ENCODE measurements at regions of chr10 and their contacts with region 1.

Region 1: DNA sequence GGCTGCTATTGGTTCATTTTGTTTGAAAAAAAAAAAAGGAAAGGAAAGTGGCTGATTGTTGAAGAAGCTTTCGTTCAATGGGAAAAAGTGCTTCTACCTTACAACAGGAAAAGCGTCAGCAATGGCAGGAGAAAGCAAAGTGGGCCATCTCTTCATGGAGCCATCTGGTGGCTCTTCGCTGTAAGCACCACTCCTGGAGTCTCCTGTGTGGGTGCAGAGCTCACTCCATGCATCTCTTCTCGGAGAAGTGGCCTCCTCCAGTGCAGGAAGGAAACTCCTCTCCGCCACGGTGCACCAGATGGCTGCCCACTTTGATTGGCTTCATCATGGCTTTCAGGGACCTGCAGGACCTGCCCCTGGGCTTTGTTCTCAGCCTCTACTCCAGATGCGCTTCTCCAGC is 250.9 kb downstream of the PTEN start:
- DNase-seq: peak in 2 of 3 donors; percentile 54 to 58
- H3K4me3 ChIP-seq: peak overlapping the region in 1 of 3 experiments; percentile 6
- H3K4me3 Mint-ChIP-seq: peak overlapping the region in 1 of 2 donors; percentile 18
- H3K27ac ChIP-seq: peak overlapping the region in 1 of 2 donors; percentile 44
- H3K27ac Mint-ChIP-seq: peak overlapping the region; percentile 51 to 86 (median 71)
- H3K4me1 ChIP-seq: peaks cover 72 to 74% of the 10 kb centered on the region in 2 donors
- H3K4me1 Mint-ChIP-seq: peaks cover 23% of the 10 kb centered on the region
- H3K27me3 ChIP-seq: no peaks in the 10 kb centered on the region
- H3K27me3 Mint-ChIP-seq: peaks cover 0 to 2% (median 2%) of the 10 kb centered on the region in 3 donors
- CTCF ChIP-seq: peak; percentile 55

Region 2: DNA sequence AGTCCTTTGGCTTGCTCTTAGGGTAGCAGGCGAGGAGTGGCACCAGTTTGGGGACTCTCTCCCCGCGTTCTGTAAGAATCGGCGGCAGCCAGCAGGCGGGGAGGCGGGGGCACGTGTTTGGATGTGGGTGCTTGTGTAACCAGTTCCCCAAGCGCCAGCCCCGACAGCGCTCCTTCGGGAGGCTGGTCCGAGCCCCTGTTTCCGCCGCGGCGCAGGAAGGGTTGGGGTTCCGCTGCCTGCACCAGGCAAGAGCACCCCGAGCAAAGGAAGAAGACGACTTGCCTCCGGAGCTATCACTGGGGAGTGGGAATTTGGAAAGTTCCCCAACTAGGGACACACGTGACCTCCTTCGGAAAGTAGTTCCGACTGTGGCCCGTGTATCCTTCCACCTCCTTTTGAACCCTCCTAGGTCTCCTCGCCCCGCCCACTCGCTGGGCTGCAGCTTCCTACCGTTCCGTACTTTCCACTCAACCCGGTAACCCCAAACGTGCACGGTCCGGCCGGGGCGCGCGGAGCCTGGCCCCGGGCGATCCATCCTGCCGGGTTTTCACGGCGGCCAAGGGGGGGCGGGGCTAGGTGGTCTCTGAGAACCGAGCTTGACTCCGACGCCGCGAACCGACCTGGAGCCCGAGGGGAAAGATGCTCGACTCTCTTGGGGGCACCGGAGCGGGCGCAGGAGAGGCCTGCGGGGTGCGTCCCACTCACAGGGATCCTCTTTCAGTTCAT is 252.3 kb before region 1 on chr10:
- intact Hi-C with region 1: loop called in 1 of 2 experiments (anchors 5 kb)
- DNase-seq: peak; percentile 96 to 98 (median 97)
- H3K4me3 ChIP-seq: peak overlapping the region; percentile 81 to 97 (median 86)
- H3K4me3 Mint-ChIP-seq: peak overlapping the region; percentile 98 to 99
- H3K27ac ChIP-seq: peak overlapping the region; percentile 89 to 93
- H3K27ac Mint-ChIP-seq: peak overlapping the region; percentile 92 to 98 (median 97)
- H3K4me1 ChIP-seq: peaks cover 16 to 39% of the 10 kb centered on the region in 2 donors
- H3K4me1 Mint-ChIP-seq: peaks cover 25% of the 10 kb centered on the region
- H3K27me3 ChIP-seq: no peaks in the 10 kb centered on the region
- H3K27me3 Mint-ChIP-seq: no peaks in the 10 kb centered on the region
- CTCF ChIP-seq: peak; percentile 3

Region 3: GRCh38 chr10:88027570-88027969 is 86.8 kb before region 1 on chr10:
- intact Hi-C with region 1: loop called in 1 of 2 experiments (anchors 10 kb)
- DNase-seq: peak; percentile 77 to 86 (median 86)
- H3K4me3 ChIP-seq: no peak overlapping the region
- H3K4me3 Mint-ChIP-seq: peak overlapping the region in 1 of 2 donors; percentile 61
- H3K27ac ChIP-seq: peak overlapping the region; percentile 30 to 57
- H3K27ac Mint-ChIP-seq: peak overlapping the region; percentile 73 to 93 (median 86)
- H3K4me1 ChIP-seq: peaks cover 23 to 24% of the 10 kb centered on the region in 2 donors
- H3K4me1 Mint-ChIP-seq: peaks cover 32% of the 10 kb centered on the region
- H3K27me3 ChIP-seq: no peaks in the 10 kb centered on the region
- H3K27me3 Mint-ChIP-seq: no peaks in the 10 kb centered on the region
- CTCF ChIP-seq: no peak

Region 4: GRCh38 chr10:88270871-88271713 is 156.7 kb after region 1 on chr10:
- intact Hi-C with region 1: loop called in 1 of 2 experiments (anchors 10 kb)
- DNase-seq: peak; percentile 50 to 94 (median 58)
- H3K4me3 ChIP-seq: peak overlapping the region in 1 of 3 experiments; percentile 18
- H3K4me3 Mint-ChIP-seq: peak overlapping the region in 1 of 2 donors; percentile 56
- H3K27ac ChIP-seq: peak overlapping the region; percentile 13 to 81
- H3K27ac Mint-ChIP-seq: peak overlapping the region; percentile 21 to 82 (median 72)
- H3K4me1 ChIP-seq: peaks cover 29 to 31% of the 10 kb centered on the region in 2 donors
- H3K4me1 Mint-ChIP-seq: peaks cover 36% of the 10 kb centered on the region
- H3K27me3 ChIP-seq: no peaks in the 10 kb centered on the region
- H3K27me3 Mint-ChIP-seq: peaks cover 0 to 6% (median 0%) of the 10 kb centered on the region in 3 donors
- CTCF ChIP-seq: no peak

Region 5: GRCh38 chr10:88411772-88412349 is 297.5 kb after region 1 on chr10:
- intact Hi-C with region 1: loop called in 1 of 2 experiments (anchors 10 kb)
- DNase-seq: no peak
- H3K4me3 ChIP-seq: no peak overlapping the region
- H3K4me3 Mint-ChIP-seq: no peak overlapping the region
- H3K27ac ChIP-seq: no peak overlapping the region
- H3K27ac Mint-ChIP-seq: no peak overlapping the region
- H3K4me1 ChIP-seq: peaks cover 19 to 37% of the 10 kb centered on the region in 2 donors
- H3K4me1 Mint-ChIP-seq: peaks cover 22% of the 10 kb centered on the region
- H3K27me3 ChIP-seq: no peaks in the 10 kb centered on the region
- H3K27me3 Mint-ChIP-seq: no peaks in the 10 kb centered on the region
- CTCF ChIP-seq: no peak